ENCODE measurements at regions of chr5 and their contacts with region 1.

Region 1: GRCh38 chr5:78886341-78887230 is 98.5 kb downstream of the ARSB start:
- DNase-seq: no peak
- H3K4me3 Mint-ChIP-seq: no peak overlapping the region
- H3K27ac Mint-ChIP-seq: no peak overlapping the region
- H3K4me1 Mint-ChIP-seq: peaks cover 17% of the 10 kb centered on the region
- H3K27me3 Mint-ChIP-seq: peaks cover 13% of the 10 kb centered on the region

Region 2: DNA sequence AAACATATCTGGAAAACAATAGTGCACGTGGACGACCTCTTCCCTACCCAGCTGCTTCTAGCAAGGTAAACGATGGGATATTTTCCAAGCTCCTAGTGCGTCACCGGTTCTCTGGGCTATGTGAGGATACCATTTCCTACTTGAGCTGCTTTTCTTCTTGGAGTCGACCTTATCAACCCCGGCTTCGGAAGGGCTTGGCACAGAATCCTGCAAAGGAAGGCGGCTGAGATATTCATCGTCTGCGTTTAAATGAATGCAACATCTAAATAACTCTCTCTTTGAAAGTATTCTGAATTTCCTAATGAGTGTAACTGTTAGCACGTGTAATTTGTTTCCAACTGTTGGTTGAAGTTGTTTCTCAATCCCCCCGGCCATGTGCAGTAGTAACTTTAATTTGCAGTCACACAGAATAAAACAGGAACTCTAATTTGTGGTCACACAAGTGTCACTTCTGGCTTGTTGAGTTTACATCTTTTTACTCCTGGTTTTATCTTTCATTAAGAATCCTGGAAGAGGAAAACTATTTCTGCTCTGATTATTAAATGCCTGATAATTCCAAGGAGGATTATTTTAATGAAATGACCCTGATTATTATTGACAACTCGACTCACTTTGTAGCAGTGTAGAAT is 525.1 kb before region 1 on chr5:
- intact Hi-C with region 1: no loop called
- DNase-seq: peak; percentile 15
- H3K4me3 Mint-ChIP-seq: peak overlapping the region; percentile 95
- H3K27ac Mint-ChIP-seq: peak overlapping the region; percentile 86
- H3K4me1 Mint-ChIP-seq: peaks cover 29% of the 10 kb centered on the region
- H3K27me3 Mint-ChIP-seq: no peaks in the 10 kb centered on the region

Region 3: GRCh38 chr5:78953092-78953800 is 66.7 kb after region 1 on chr5:
- intact Hi-C with region 1: loop called (anchors 1 kb)
- DNase-seq: no peak
- H3K4me3 Mint-ChIP-seq: no peak overlapping the region
- H3K27ac Mint-ChIP-seq: no peak overlapping the region
- H3K4me1 Mint-ChIP-seq: peaks cover 24% of the 10 kb centered on the region
- H3K27me3 Mint-ChIP-seq: no peaks in the 10 kb centered on the region

Region 4: GRCh38 chr5:79924936-79925893 is 1038.6 kb after region 1 on chr5:
- intact Hi-C with region 1: no loop called
- DNase-seq: no peak
- H3K4me3 Mint-ChIP-seq: no peak overlapping the region
- H3K27ac Mint-ChIP-seq: no peak overlapping the region
- H3K4me1 Mint-ChIP-seq: peaks cover 10% of the 10 kb centered on the region
- H3K27me3 Mint-ChIP-seq: peaks cover 11% of the 10 kb centered on the region